Aorta (tissue), 5 donors: ENCODE measurements at regions of chr3 and their contacts with region 1.

Region 1: GRCh38 chr3:12663936-12664908 is at the start of gene RAF1:
- DNase-seq: peak; percentile 99
- ATAC-seq: peak; percentile 99
- H3K4me3 ChIP-seq: peak within 1 kb of the TSS; percentile 70 to 74
- H3K27ac ChIP-seq: peak within 1 kb of the TSS; percentile 81 to 89
- H3K4me1 ChIP-seq: no peaks in the 10 kb centered on the region
- H3K27me3 ChIP-seq: no peaks in the 10 kb centered on the region
- total RNA-seq, gene RAF1: 96.2 to 117 TPM

Region 2: GRCh38 chr3:12273045-12273695 is 391.1 kb before region 1 on chr3:
- intact Hi-C with region 1: no loop called
- DNase-seq: no peak
- ATAC-seq: no peak
- H3K4me3 ChIP-seq: no peak overlapping the region
- H3K27ac ChIP-seq: no peak overlapping the region
- H3K4me1 ChIP-seq: no peaks in the 10 kb centered on the region
- H3K27me3 ChIP-seq: no peaks in the 10 kb centered on the region

Region 3: GRCh38 chr3:12484198-12484974 is 179.8 kb before region 1 on chr3 and contains the start of gene TSEN2:
- intact Hi-C with region 1: loop called in 1 of 2 experiments (anchors 5 kb)
- DNase-seq: peak; percentile 96 to 98
- ATAC-seq: peak; percentile 97
- H3K4me3 ChIP-seq: peak within 1 kb of the TSS; percentile 55 to 68
- H3K27ac ChIP-seq: peak within 1 kb of the TSS in 1 of 2 donors; percentile 52
- H3K4me1 ChIP-seq: no peaks in the 10 kb centered on the region
- H3K27me3 ChIP-seq: no peaks in the 10 kb centered on the region
- total RNA-seq, gene TSEN2: 13.2 to 14.7 TPM

Region 4: DNA sequence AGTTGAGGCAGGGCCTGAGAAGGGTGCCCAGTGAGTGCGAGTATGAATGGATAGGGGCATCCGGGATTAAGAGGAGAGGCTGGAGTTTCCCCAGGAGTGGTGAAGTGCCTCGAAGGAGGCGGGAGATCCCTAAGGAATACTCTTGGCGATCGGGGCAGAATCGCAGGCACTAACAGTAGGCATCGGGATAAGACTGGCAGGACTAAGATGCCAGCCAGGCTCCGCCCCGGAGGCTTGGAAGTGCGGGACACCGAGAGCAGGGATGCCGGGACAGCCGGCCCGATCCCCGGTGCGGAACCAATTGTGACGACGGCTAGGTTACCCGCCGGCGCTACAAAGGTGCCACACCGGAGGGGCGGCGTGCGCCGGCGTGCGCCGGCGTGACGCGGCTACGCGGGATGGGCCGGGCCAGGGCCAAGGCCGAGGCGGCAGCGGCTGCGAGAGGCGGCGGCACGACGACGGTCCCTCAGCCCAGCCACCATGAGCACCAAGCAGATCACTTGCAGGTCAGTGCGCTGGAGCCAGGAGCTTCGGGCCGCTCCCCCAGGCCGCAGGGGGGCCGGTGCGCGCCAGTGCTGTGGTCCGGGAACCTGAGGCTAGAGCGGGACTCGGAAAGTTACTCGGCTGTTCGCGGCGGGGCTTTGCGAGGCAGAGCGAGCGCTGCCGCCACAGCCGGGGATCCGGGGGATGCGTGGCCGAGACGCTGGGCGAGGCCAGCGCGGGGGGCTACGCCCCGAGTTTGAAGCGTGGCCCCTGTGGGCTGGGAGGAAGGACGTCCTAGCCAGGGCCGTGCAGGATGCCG is 107.3 kb before region 1 on chr3 and contains the start of gene MKRN2:
- intact Hi-C with region 1: loop called in 1 of 2 experiments (anchors 2 kb)
- DNase-seq: peak; percentile 92 to 95
- ATAC-seq: peak; percentile 99
- H3K4me3 ChIP-seq: peak within 1 kb of the TSS; percentile 64 to 73
- H3K27ac ChIP-seq: peak within 1 kb of the TSS; percentile 1 to 72
- H3K4me1 ChIP-seq: peaks cover 2 to 17% of the 10 kb centered on the region in 2 donors
- H3K27me3 ChIP-seq: no peaks in the 10 kb centered on the region
- total RNA-seq, gene MKRN2: 22.2 to 22.5 TPM

Region 5: DNA sequence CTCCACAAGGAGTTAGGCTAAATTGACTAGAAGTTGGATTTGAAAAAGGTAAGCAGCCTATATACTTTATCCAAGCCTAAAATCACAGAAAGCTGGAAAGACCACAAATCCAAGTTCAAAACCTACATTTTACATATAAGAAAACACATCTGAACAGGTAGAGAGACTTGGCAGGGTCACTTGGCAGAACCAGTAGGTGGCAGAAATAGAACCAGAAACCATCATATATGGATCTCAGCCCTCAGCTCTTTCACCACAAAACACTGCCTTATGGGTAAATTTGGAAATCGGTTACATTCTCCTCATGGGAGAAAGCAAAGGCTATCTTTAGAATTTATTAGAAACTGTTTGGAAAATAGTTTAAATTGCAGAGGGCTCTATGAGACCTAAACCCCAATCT is 63.1 kb before region 1 on chr3:
- intact Hi-C with region 1: loop called (anchors 1 to 10 kb)
- DNase-seq: no peak
- ATAC-seq: no peak
- H3K4me3 ChIP-seq: no peak overlapping the region
- H3K27ac ChIP-seq: peak overlapping the region in 1 of 2 donors; percentile 36
- H3K4me1 ChIP-seq: peaks cover 3% of the 10 kb centered on the region in 2 donors
- H3K27me3 ChIP-seq: no peaks in the 10 kb centered on the region

Region 6: DNA sequence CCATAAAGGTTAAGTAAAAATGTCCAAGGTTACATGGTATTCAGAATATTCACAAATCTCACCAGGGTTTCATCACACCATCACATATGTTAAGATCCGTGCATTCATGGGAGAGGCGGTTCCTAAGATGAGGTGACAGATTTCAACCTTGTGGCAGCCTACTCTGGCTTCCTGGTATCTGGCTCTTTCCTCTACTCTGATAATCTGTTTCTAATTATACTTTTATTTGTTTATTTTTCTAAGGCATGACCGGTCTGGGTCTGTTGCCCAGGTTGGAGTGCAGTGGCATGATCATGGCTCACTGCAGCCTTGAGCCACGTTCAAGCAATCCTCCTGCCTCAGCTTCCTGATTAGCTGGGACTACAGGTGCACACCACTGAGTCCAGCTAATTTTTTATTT is 34.7 kb before region 1 on chr3:
- intact Hi-C with region 1: loop called in 1 of 2 experiments (anchors 5 kb)
- DNase-seq: no peak
- ATAC-seq: peak; percentile 66
- H3K4me3 ChIP-seq: no peak overlapping the region
- H3K27ac ChIP-seq: no peak overlapping the region
- H3K4me1 ChIP-seq: peaks cover 6 to 9% of the 10 kb centered on the region in 2 donors
- H3K27me3 ChIP-seq: no peaks in the 10 kb centered on the region

Region 7: GRCh38 chr3:12706504-12707253 is 42.5 kb after region 1 on chr3:
- intact Hi-C with region 1: loop called (anchors 5 to 10 kb)
- DNase-seq: peak in 1 of 2 donors; percentile 67
- ATAC-seq: peak; percentile 82
- H3K4me3 ChIP-seq: no peak overlapping the region
- H3K27ac ChIP-seq: no peak overlapping the region
- H3K4me1 ChIP-seq: peaks cover 0 to 2% of the 10 kb centered on the region in 2 donors
- H3K27me3 ChIP-seq: no peaks in the 10 kb centered on the region

Region 8: DNA sequence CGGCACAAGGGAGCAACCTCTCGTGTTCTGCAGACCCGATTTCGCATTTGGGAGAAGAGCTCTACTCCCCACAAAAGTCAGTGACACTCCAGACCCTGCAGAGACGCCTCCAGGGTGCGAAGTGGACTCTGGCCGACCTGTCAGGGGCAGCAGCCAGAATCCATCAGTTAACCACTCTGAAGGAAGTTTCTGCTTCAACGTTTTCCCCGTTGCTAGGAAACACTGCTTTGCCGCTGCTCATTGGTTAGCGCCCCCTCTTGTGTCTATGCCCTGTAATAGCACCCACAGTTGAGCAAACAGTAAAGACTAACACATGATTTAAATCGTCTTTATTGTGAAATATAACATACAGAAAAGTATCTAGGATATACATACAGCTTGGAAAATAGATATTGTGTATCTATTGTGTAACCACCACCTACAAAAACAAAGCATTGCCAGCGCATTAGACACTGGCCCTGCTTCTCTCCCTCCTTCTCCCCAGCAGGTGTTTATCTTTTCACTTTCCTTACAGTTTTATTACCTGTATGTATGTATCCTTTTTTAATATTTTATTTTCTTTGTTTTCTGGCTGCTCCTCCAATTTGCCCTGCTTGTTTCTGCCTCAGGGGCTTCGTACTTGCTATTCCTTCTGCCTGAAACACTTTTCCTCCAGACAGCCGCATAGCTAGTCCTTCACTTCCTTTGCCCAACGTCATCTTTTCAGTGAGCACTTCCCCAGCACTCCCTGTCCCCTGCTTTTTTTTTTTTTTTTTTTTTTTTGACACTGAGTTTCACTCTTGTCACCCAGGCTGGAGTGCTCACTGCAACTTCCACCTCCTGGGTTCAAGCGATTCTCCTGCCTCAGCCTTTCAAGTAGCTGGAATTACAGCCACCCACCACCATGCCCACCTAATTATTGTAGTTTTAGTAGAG is 56.0 kb after region 1 on chr3:
- intact Hi-C with region 1: loop called in 1 of 2 experiments (anchors 10 kb)
- DNase-seq: peak; percentile 83
- ATAC-seq: peak; percentile 96
- H3K4me3 ChIP-seq: peak overlapping the region in 1 of 2 donors; percentile 38
- H3K27ac ChIP-seq: no peak overlapping the region
- H3K4me1 ChIP-seq: no peaks in the 10 kb centered on the region
- H3K27me3 ChIP-seq: no peaks in the 10 kb centered on the region

Region 9: GRCh38 chr3:12768579-12769527 is 104.6 kb after region 1 on chr3:
- intact Hi-C with region 1: no loop called
- DNase-seq: no peak
- ATAC-seq: no peak
- H3K4me3 ChIP-seq: no peak overlapping the region
- H3K27ac ChIP-seq: no peak overlapping the region
- H3K4me1 ChIP-seq: no peaks in the 10 kb centered on the region
- H3K27me3 ChIP-seq: no peaks in the 10 kb centered on the region